Lower leg skin (tissue), 4 donors: ENCODE measurements at regions of chr5 and their contacts with region 1.

Region 1: GRCh38 chr5:83564069-83564749 is 92.7 kb downstream of the VCAN start:
- DNase-seq: no peak
- H3K4me3 ChIP-seq: no peak overlapping the region
- CTCF ChIP-seq: peak in 1 of 3 donors; percentile 27
- POLR2A ChIP-seq: no peak

Region 2: GRCh38 chr5:82349651-82350050 is 1214.6 kb before region 1 on chr5:
- intact Hi-C with region 1: loop called (anchors 5 kb)
- DNase-seq: no peak
- H3K4me3 ChIP-seq: no peak overlapping the region
- CTCF ChIP-seq: no peak
- POLR2A ChIP-seq: no peak